Activated naive CD4-positive, alpha-beta T cell treated with anti-CD3 and anti-CD28 coated beads, Interleukin-2, amount 10 ng/mL, durations not matched to agents 7 days and 5 days (primary cell): ENCODE measurements at regions of chr1 and their contacts with region 1.

Region 1: DNA sequence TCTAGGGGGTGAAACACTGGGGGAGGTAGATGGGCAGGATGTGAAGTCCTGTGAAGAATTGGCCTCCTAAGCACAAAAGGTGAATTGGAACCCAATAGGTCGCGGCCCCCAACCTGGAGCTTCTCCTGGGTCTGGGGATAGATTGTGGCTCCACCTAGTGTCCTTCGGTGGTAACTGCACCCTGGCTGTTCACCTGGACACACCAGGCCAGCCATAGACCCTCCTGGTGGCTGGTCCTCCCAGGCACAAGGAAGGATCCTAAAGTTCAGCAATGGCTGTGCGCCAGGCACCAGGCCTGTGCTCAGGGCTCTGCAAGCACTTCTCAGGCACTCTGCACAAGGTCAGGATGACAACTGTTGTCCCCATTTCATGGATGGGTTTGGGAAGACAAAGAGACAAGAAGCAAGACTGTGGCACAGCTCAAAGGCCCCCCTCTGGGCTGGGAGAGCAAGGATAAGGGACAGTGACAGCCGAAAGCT is 13.5 kb downstream of the ESPN start:
- DNase-seq: peak; percentile 84
- H3K4me3 Mint-ChIP-seq: no peak overlapping the region
- H3K27ac Mint-ChIP-seq: no peak overlapping the region
- H3K4me1 Mint-ChIP-seq: peaks cover 8% of the 10 kb centered on the region
- H3K27me3 Mint-ChIP-seq: peaks cover 88% of the 10 kb centered on the region

Region 2: GRCh38 chr1:6423321-6423999 is 14.6 kb before region 1 on chr1:
- CTCF ChIA-PET with region 1: interaction called, 78 read pairs
- DNase-seq: peak; percentile 81
- H3K4me3 Mint-ChIP-seq: no peak overlapping the region
- H3K27ac Mint-ChIP-seq: no peak overlapping the region
- H3K4me1 Mint-ChIP-seq: peaks cover 24% of the 10 kb centered on the region
- H3K27me3 Mint-ChIP-seq: peaks cover 97% of the 10 kb centered on the region

Region 3: GRCh38 chr1:6460301-6461050 is 22.4 kb after region 1 on chr1:
- CTCF ChIA-PET with region 1: interaction called, 12 read pairs
- DNase-seq: peak; percentile 93
- H3K4me3 Mint-ChIP-seq: peak overlapping the region; percentile 89
- H3K27ac Mint-ChIP-seq: peak overlapping the region; percentile 97
- H3K4me1 Mint-ChIP-seq: peaks cover 66% of the 10 kb centered on the region
- H3K27me3 Mint-ChIP-seq: peaks cover 25% of the 10 kb centered on the region

Region 4: DNA sequence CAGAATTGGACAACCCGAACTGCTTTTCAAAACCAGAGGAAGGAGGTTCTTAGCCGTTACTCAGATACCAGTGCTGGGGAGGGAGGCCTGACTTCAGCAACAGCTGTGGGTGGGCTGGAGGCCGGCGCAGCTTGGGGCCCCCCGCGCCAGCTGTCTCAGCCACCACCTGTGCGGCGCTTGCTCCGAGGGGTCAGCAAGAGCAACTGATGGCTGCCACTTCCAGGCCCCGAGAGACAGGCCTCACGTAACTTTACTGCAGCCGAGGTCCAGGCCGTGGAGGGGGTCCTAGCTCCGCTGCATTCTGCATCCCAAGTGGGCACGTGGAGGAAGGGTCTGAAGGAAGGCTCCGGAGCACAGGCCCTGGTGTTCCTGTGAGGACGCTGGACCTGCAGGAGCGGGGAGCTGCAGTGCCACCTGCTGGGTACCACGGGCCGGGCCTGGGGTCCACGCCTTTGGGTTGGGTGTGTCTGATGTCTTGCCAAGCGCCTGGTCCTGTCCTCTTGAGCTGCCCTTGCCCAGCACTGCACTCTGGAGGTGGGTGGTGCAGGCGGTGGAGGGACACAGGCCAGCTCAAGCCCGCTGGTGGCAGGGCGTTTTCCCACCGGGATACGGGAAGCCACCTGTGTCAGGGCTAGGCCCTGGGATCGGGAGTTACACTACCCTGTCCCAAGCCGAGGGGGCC is 196.4 kb after region 1 on chr1:
- CTCF ChIA-PET with region 1: no interaction called
- DNase-seq: peak; percentile 64
- H3K4me3 Mint-ChIP-seq: no peak overlapping the region
- H3K27ac Mint-ChIP-seq: peak overlapping the region; percentile 8
- H3K4me1 Mint-ChIP-seq: peaks cover under 1% of the 10 kb centered on the region
- H3K27me3 Mint-ChIP-seq: no peaks in the 10 kb centered on the region